Right ventricle myocardium inferior (tissue), 1 donor: ENCODE measurements at regions of chr17 and their contacts with region 1.

Region 1: GRCh38 chr17:60421273-60421934 is 885 bp upstream of the CHCT1 start:
- DNase-seq: peak; percentile 87
- ATAC-seq: peak; percentile 94

Region 2: DNA sequence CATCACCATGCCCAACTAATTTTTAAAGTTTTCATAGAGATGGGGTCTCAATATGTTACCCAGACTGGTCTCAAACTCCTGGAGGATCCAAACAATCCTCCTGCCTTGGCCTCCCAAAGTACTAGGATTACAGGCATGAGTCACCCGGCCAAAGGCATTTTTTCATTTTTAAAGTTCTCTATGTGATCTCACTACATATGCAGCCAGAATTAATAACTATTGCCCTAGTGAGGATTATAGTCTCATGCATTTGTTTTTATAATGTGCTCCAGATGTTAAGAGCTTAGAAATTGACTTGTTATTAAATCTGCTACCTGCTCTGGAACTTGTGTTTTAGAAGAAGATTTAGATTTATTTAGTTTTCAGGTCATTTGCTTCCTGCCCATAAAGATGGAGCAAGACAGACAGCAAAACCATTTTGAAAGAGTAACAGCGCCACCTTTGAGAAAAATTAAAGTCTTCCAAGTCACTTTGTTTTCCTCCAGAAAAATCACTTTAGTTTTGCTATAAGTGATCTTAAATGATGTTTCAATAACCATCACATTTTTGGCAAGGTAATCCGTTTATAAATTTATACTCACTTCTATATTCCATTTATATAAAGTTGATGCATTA is 192.1 kb before region 1 on chr17:
- intact Hi-C with region 1: loop called (anchors 10 kb)
- DNase-seq: no peak
- ATAC-seq: no peak

Region 3: DNA sequence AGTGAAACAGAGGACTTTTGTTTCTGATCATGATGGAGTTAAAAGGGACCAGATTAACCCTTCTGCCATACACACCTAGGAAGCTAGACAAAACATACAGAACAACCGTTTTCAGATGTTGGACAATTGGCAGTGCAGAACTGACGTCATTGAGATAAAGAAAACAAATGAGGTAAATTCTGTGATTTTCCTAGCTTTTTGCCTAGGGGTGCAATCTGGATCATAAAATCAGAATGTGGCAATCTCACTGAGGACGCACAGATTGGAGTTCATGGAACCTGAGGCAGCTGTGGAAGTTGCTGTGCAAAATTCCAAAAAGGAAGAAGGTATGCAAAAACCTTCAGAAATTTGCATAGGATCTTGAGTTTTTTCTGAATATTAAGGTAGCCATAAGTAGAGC is 14.5 kb before region 1 on chr17:
- intact Hi-C with region 1: no loop called
- DNase-seq: no peak
- ATAC-seq: no peak